ENCODE measurements at regions of chr1 and their contacts with region 1.

Region 1: GRCh38 chr1:84143796-84144565 is at the start of gene PRKACB:
- DNase-seq: no peak
- ATAC-seq: peak; percentile 89
- H3K4me3 Mint-ChIP-seq: peak within 1 kb of the TSS; percentile 85
- H3K27ac Mint-ChIP-seq: peak within 1 kb of the TSS; percentile 98
- H3K4me1 Mint-ChIP-seq: peaks cover 40% of the 10 kb centered on the region
- H3K27me3 Mint-ChIP-seq: no peaks in the 10 kb centered on the region
- total RNA-seq, gene PRKACB: 22.2 to 25.5 TPM

Region 2: DNA sequence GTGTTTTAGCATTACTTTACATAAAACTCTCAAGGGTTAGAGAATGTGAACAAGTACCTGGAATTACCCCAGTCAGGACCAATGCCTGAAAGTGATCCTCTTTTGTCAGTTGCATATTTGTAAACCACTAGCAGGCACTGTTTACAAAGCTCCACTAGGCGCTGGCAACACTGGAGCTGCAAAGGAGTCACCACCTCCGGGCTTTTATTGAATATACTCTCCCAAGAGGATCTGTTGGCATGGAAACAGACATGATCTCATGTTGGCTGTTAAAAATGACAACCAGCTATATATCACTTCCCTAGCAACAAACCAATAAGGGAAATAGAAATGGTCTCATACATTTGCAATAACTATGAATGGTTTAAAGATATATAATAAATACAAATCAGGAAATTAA is 261.1 kb before region 1 on chr1:
- CTCF ChIA-PET with region 1: no interaction called
- POLR2A ChIA-PET with region 1: no interaction called
- intact Hi-C with region 1: no loop called
- DNase-seq: no peak
- ATAC-seq: no peak
- H3K4me3 Mint-ChIP-seq: no peak overlapping the region
- H3K27ac Mint-ChIP-seq: no peak overlapping the region
- H3K4me1 Mint-ChIP-seq: no peaks in the 10 kb centered on the region
- H3K27me3 Mint-ChIP-seq: peaks cover 4% of the 10 kb centered on the region

Region 3: GRCh38 chr1:84156210-84156621 is 12.2 kb after region 1 on chr1:
- CTCF ChIA-PET with region 1: interaction called, 44 read pairs
- POLR2A ChIA-PET with region 1: interaction called, 4 read pairs
- intact Hi-C with region 1: loop called (anchors 1 kb)
- DNase-seq: peak; percentile 7
- ATAC-seq: peak; percentile 49
- H3K4me3 Mint-ChIP-seq: peak overlapping the region; percentile 38
- H3K27ac Mint-ChIP-seq: peak overlapping the region; percentile 65
- H3K4me1 Mint-ChIP-seq: peaks cover 87% of the 10 kb centered on the region
- H3K27me3 Mint-ChIP-seq: no peaks in the 10 kb centered on the region

Region 4: DNA sequence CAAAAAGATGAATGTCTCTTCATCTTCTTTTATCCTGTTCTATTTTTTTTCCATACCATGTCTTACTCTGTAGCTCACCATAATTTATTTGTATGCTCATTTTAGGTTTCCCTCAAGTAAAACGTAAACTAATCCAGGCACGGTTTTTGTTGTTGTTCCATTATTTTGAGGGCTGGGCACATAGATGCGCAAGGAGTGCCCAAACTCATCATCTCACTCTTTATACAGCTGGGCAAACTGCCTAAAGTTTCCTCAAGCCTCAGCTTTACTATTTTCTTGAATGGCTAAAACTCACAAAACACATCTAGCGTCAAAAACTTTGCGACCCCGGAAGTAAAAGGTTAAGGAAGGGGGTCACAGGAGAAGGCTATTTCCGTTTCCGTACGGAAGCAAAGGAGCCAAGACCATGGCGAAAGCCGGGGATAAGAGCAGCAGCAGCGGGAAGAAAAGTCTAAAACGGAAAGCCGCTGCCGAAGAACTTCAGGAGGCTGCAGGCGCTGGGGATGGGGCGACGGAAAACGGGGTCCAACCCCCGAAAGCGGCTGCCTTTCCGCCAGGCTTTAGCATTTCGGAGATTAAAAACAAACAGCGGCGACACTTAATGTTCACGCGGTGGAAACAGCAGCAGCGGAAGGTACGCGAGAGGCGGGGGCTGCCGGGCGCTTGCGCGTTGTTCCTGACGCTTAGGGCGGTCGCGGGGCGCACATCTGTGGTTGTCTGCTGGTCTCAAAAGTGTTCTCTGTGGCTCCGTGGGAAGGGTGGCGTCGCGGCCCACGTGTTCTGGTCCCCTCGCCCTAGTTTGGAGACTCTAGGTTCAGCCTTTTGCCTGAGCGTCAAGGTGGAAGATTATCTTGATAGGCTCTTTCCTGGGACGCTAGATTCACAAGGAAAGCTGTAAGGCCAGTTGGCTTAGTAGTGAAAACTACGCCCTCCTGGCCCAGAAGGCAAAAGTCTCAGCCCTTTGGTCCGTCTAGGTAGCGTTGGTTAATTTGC is 335.2 kb after region 1 on chr1 and contains the start of gene RPF1:
- CTCF ChIA-PET with region 1: interaction called, 5 read pairs
- POLR2A ChIA-PET with region 1: no interaction called
- intact Hi-C with region 1: loop called in 1 of 2 experiments (anchors 2 kb)
- DNase-seq: peak; percentile 86
- ATAC-seq: peak; percentile 92
- H3K4me3 Mint-ChIP-seq: peak within 1 kb of the TSS; percentile 92
- H3K27ac Mint-ChIP-seq: peak within 1 kb of the TSS; percentile 98
- H3K4me1 Mint-ChIP-seq: peaks cover 40% of the 10 kb centered on the region
- H3K27me3 Mint-ChIP-seq: peaks cover 17% of the 10 kb centered on the region
- total RNA-seq, gene RPF1: 59.1 to 70.2 TPM

Region 5: DNA sequence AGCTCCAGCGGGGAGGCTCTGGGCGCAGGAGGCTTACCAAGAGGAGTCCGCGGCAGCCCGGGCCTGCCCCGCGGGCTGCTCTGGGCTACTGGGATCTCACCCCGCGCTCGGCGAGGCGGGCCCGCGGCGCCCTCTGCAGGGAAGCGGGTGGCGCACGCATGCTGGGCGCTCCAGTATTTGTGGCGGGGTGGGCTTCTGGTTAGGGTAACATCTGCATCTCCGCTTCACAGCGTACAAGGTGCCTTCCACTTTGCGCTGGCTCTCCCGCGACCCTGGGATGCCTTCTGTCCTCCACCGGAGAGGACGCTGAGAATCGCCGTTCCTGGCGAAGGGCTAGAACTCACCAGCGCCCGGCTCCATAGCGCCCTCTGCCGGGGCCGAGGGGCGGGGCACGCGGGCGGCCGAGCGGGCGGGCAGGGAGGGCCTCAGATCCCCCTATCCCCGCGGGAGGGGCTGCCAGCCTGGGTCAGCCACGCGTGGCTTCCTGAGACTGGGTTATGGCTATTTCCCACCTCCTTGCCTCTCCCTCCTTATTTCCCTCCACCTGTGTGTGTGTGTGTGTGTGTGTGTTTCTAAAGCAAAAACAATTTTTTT is 476.8 kb after region 1 on chr1:
- CTCF ChIA-PET with region 1: interaction called, 10 read pairs
- POLR2A ChIA-PET with region 1: no interaction called
- intact Hi-C with region 1: loop called (anchors 2 to 5 kb)
- DNase-seq: peak; percentile 91
- ATAC-seq: peak; percentile 90
- H3K4me3 Mint-ChIP-seq: peak overlapping the region; percentile 80
- H3K27ac Mint-ChIP-seq: peak overlapping the region; percentile 91
- H3K4me1 Mint-ChIP-seq: peaks cover 20% of the 10 kb centered on the region
- H3K27me3 Mint-ChIP-seq: no peaks in the 10 kb centered on the region

Region 6: GRCh38 chr1:84753516-84754385 is 609.8 kb after region 1 on chr1:
- CTCF ChIA-PET with region 1: interaction called, 9 read pairs
- POLR2A ChIA-PET with region 1: no interaction called
- intact Hi-C with region 1: loop called (anchors 1 to 5 kb)
- DNase-seq: peak; percentile 88
- ATAC-seq: peak; percentile 87
- H3K4me3 Mint-ChIP-seq: no peak overlapping the region
- H3K27ac Mint-ChIP-seq: no peak overlapping the region
- H3K4me1 Mint-ChIP-seq: peaks cover 14% of the 10 kb centered on the region
- H3K27me3 Mint-ChIP-seq: peaks cover 10% of the 10 kb centered on the region

Region 7: GRCh38 chr1:84936116-84936810 is 792.3 kb after region 1 on chr1:
- CTCF ChIA-PET with region 1: no interaction called
- POLR2A ChIA-PET with region 1: no interaction called
- intact Hi-C with region 1: loop called in 1 of 2 experiments (anchors 5 kb)
- DNase-seq: peak; percentile 25
- ATAC-seq: peak; percentile 53
- H3K4me3 Mint-ChIP-seq: no peak overlapping the region
- H3K27ac Mint-ChIP-seq: no peak overlapping the region
- H3K4me1 Mint-ChIP-seq: peaks cover 4% of the 10 kb centered on the region
- H3K27me3 Mint-ChIP-seq: no peaks in the 10 kb centered on the region

Measured in activated CD4-positive, alpha-beta T cell treated with anti-CD3 and anti-CD28 coated beads for 36 hours (primary cell).